CD14-positive monocyte (primary cell): ENCODE measurements at regions of chr19 and their contacts with region 1.

Region 1: DNA sequence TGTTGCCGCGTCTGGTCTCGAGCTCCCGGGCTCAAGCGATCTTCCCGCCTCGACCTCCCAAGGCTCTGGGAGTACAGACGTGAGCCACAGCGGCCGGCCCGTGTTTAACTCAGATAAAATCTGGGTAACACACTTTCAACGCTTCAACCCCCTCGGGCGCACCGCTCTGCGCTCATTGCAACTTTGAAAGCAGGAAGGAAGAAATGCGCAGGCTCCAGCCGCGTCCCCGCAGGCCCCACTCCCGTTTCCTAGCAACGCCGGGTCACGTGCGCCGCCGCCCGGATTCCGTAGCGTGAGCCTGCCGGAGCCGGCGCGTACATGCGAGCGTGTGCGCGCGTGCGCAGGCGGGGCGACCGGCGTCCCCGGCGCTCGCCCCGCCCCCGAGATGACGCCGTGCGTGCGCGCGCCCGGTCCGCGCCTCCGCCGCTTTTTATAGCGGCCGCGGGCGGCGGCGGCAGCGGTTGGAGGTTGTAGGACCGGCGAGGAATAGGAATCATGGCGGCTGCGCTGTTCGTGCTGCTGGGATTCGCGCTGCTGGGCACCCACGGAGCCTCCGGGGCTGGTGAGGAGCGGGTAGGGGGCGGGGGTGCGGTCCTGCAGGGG is at the start of gene BSG:
- DNase-seq: peak; percentile 97 to 98 (median 98)
- H3K4me3 ChIP-seq: peak within 1 kb of the TSS; percentile 82 to 95 (median 90)
- H3K4me3 Mint-ChIP-seq: peak within 1 kb of the TSS; percentile 89 to 97
- H3K27ac ChIP-seq: peak within 1 kb of the TSS; percentile 75 to 84
- H3K27ac Mint-ChIP-seq: peak within 1 kb of the TSS; percentile 92 to 99 (median 98)
- H3K4me1 ChIP-seq: peaks cover 53 to 66% of the 10 kb centered on the region in 2 donors
- H3K4me1 Mint-ChIP-seq: peaks cover 62% of the 10 kb centered on the region
- H3K27me3 ChIP-seq: no peaks in the 10 kb centered on the region
- H3K27me3 Mint-ChIP-seq: peaks cover 0 to 2% (median 0%) of the 10 kb centered on the region in 3 donors
- CTCF ChIP-seq: no peak
- polyA plus RNA-seq, gene BSG: 190 to 431 (median 364) TPM

Region 2: GRCh38 chr19:531009-531752 is 41.1 kb before region 1 on chr19:
- intact Hi-C with region 1: loop called (anchors 2 to 5 kb)
- DNase-seq: peak; percentile 70 to 77 (median 75)
- H3K4me3 ChIP-seq: peak overlapping the region; percentile 53 to 91 (median 77)
- H3K4me3 Mint-ChIP-seq: peak overlapping the region; percentile 80 to 84
- H3K27ac ChIP-seq: peak overlapping the region in 1 of 2 donors; percentile 82
- H3K27ac Mint-ChIP-seq: peak overlapping the region in 5 of 7 donors; percentile 45 to 89 (median 67)
- H3K4me1 ChIP-seq: peaks cover 24 to 27% of the 10 kb centered on the region in 2 donors
- H3K4me1 Mint-ChIP-seq: peaks cover 23% of the 10 kb centered on the region
- H3K27me3 ChIP-seq: peaks cover 0 to 1% of the 10 kb centered on the region in 2 donors
- H3K27me3 Mint-ChIP-seq: peaks cover under 1 to 4% (median 2%) of the 10 kb centered on the region in 3 donors
- CTCF ChIP-seq: no peak

Region 3: DNA sequence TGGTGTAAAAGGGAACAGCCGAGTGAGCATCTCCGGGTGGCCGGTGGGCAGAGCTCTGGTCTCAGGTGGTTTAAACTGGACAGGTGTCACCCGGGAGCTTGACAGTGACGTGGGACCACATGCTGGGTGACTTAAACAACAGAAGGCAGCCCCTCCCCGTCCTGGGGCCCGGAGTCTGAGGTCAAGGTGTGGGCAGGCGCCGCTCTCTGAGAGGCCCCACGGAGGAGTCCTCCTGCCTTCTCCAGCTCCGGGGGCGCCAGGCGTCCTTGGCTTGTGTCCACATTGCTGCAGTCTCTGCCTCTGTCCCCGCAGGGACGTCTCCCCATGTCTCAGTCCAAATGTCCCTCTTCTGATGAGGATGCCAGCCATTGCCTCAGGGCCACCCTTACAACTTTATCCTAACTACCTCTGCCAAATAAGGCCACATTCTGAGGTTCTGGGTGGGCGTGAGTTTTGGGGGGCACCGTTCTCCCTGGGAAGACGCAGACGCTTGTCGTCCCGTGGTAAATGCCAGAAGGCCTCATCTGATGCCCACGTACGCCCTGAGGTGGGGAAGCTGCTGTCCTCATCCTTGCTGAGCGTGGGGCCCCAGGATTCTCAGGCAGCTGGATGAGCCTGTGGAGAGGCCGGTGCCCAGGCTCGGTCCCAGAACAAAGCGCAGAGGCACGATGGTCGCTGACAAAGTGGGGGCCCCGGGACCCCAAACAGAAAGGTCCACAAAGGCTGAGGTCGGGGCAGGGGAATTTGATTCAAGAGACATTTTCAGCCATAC is 15.4 kb before region 1 on chr19:
- intact Hi-C with region 1: loop called in 1 of 2 experiments (anchors 2 kb)
- DNase-seq: no peak
- H3K4me3 ChIP-seq: peak overlapping the region in 1 of 3 experiments; percentile 65
- H3K4me3 Mint-ChIP-seq: peak overlapping the region; percentile 64 to 82
- H3K27ac ChIP-seq: peak overlapping the region; percentile 65 to 84
- H3K27ac Mint-ChIP-seq: peak overlapping the region; percentile 82 to 94 (median 90)
- H3K4me1 ChIP-seq: peaks cover 26 to 40% of the 10 kb centered on the region in 2 donors
- H3K4me1 Mint-ChIP-seq: peaks cover 38% of the 10 kb centered on the region
- H3K27me3 ChIP-seq: no peaks in the 10 kb centered on the region
- H3K27me3 Mint-ChIP-seq: peaks cover 0 to 2% (median under 1%) of the 10 kb centered on the region in 3 donors
- CTCF ChIP-seq: no peak

Region 4: DNA sequence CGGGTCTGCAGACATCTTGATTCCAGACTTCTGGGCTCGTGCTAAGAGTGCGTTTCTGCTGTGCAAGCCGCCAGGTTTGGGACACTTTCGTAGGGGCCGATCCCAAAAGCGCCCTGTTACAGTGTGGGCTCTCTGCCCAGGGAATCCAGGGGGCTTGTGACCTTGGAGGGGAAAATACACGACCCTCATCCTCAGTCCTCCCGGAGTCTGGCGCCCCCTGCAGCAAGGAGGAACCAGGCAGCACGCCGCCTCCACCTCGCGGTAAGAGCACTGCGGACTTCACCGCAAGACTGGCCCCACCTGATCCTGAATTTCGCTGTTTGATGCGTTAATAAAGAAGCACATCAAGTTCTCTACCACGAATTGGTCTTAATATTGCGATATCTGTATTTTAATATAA is 55.9 kb after region 1 on chr19:
- intact Hi-C with region 1: no loop called
- DNase-seq: no peak
- H3K4me3 ChIP-seq: no peak overlapping the region
- H3K4me3 Mint-ChIP-seq: no peak overlapping the region
- H3K27ac ChIP-seq: no peak overlapping the region
- H3K27ac Mint-ChIP-seq: peak overlapping the region in 1 of 7 donors; percentile 77
- H3K4me1 ChIP-seq: peaks cover 12 to 14% of the 10 kb centered on the region in 2 donors
- H3K4me1 Mint-ChIP-seq: peaks cover 14% of the 10 kb centered on the region
- H3K27me3 ChIP-seq: no peaks in the 10 kb centered on the region
- H3K27me3 Mint-ChIP-seq: peaks cover 0 to 3% (median 3%) of the 10 kb centered on the region in 3 donors
- CTCF ChIP-seq: peak; percentile 11

Region 5: GRCh38 chr19:639253-640160 is 67.3 kb after region 1 on chr19 and contains the start of gene FGF22:
- intact Hi-C with region 1: loop called in 1 of 2 experiments (anchors 5 kb)
- DNase-seq: peak; percentile 82 to 86 (median 84)
- H3K4me3 ChIP-seq: peak within 1 kb of the TSS in 2 of 3 experiments; percentile 21 to 66
- H3K4me3 Mint-ChIP-seq: peak within 1 kb of the TSS; percentile 70 to 92
- H3K27ac ChIP-seq: no peak within 1 kb of the TSS
- H3K27ac Mint-ChIP-seq: peak within 1 kb of the TSS in 4 of 7 donors; percentile 19 to 80 (median 58)
- H3K4me1 ChIP-seq: peaks cover 7 to 17% of the 10 kb centered on the region in 2 donors
- H3K4me1 Mint-ChIP-seq: peaks cover 6% of the 10 kb centered on the region
- H3K27me3 ChIP-seq: peaks cover 0 to 18% of the 10 kb centered on the region in 2 donors
- H3K27me3 Mint-ChIP-seq: peaks cover 23 to 33% (median 27%) of the 10 kb centered on the region in 3 donors
- CTCF ChIP-seq: no peak
- polyA plus RNA-seq, gene FGF22: not detected